ENCODE measurements at regions of chr20 and their contacts with region 1.

Region 1: GRCh38 chr20:3156811-3157619 is 2.6 kb downstream of the FASTKD5 start:
- DNase-seq: no peak
- H3K4me3 ChIP-seq: no peak overlapping the region
- H3K27ac ChIP-seq: no peak overlapping the region
- H3K4me1 ChIP-seq: peaks cover 0 to 51% (median 45%) of the 10 kb centered on the region in 4 donors
- H3K27me3 ChIP-seq: no peaks in the 10 kb centered on the region
- CTCF ChIP-seq: no peak
- EP300 ChIP-seq: no peak
- POLR2A ChIP-seq: no peak

Region 2: GRCh38 chr20:3204124-3204822 is 47.3 kb after region 1 on chr20 and contains the start of gene DDRGK1:
- intact Hi-C with region 1: loop called (anchors 5 kb)
- DNase-seq: peak; percentile 95
- H3K4me3 ChIP-seq: peak within 1 kb of the TSS; percentile 72 to 93 (median 80)
- H3K27ac ChIP-seq: peak within 1 kb of the TSS; percentile 86 to 88 (median 88)
- H3K4me1 ChIP-seq: peaks cover 0 to 19% (median 14%) of the 10 kb centered on the region in 4 donors
- H3K27me3 ChIP-seq: no peaks in the 10 kb centered on the region
- CTCF ChIP-seq: no peak
- EP300 ChIP-seq: no peak
- POLR2A ChIP-seq: peak; percentile 52
- total RNA-seq, gene DDRGK1: 56.0 to 86.1 (median 73.6) TPM

Region 3: GRCh38 chr20:3222635-3223600 is 65.9 kb after region 1 on chr20:
- intact Hi-C with region 1: no loop called
- DNase-seq: no peak
- H3K4me3 ChIP-seq: no peak overlapping the region
- H3K27ac ChIP-seq: no peak overlapping the region
- H3K4me1 ChIP-seq: peaks cover 0 to 7% (median 6%) of the 10 kb centered on the region in 4 donors
- H3K27me3 ChIP-seq: no peaks in the 10 kb centered on the region
- CTCF ChIP-seq: no peak
- EP300 ChIP-seq: no peak
- POLR2A ChIP-seq: no peak

Region 4: DNA sequence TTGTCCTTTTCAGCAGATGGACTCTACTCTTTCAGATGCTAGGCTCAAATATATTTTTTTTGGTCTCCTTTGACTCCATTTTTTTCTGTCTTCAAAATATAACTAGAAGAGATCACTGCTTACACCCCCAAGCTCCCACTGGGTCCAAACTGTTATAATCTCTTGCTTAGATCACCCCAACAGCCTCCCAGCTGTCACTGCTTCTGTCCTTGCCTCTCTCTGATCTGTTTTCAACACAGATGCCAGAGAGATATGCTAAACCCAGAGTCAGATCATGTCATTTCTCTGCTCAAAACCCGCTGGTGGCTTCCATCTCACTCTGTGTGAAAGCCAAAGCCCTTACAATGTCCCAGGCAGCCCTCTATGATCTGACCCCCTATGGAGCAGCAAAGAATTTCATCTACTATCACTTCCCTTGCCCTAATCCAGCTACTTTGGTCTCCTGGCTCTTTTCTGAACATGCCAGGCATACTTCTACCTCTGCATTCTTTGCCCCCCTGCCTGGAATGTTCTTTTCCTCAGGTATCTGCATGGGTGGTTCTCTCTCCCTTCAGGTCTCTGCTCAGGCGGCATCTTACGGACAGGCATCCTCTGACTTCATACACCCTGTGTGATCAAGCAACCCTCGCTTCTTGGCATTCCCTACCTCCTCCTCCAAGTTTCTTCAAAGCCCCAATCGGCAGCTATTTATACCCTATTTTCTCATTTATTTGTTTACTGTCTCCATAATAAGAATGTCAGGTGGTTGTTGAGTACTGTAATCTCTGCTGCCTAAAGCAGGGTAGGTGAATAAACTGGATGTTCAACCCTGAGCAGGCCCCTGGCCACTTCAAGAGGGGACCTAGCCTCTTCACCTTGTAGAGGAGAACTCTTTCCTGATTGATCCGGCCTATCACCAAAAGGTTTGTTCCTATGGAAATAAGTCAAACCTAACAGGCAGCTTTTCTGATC is 125.5 kb after region 1 on chr20:
- intact Hi-C with region 1: no loop called
- DNase-seq: no peak
- H3K4me3 ChIP-seq: no peak overlapping the region
- H3K27ac ChIP-seq: no peak overlapping the region
- H3K4me1 ChIP-seq: no peaks in the 10 kb centered on the region
- H3K27me3 ChIP-seq: no peaks in the 10 kb centered on the region
- CTCF ChIP-seq: no peak
- EP300 ChIP-seq: no peak
- POLR2A ChIP-seq: no peak

Measured in sigmoid colon (tissue), 7 donors.